ENCODE measurements at regions of chr4 and their contacts with region 1.

Region 1: DNA sequence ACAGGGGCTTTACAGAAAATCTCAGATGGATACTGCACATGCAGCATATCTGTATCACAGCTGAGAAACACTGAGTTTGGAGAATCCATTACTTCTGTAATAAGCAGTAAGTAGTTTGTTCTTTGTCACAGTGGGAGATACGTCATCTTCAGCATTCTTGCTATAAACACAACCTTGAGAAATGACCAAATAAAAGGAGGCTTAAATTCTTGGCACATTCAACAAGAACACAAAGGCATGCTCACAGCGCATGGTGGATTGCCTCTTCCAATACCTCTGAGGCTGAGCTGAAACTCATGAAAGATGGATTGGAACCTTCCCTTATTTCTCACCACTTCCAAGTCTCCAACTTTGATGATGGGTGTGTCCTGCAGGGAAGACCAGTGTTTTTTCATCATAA is 54.5 kb downstream of the ANXA5 start:
- DNase-seq: no peak
- H3K4me3 ChIP-seq: no peak overlapping the region
- H3K4me3 Mint-ChIP-seq: peak overlapping the region; percentile 62
- H3K27ac Mint-ChIP-seq: peak overlapping the region; percentile 93
- H3K4me1 ChIP-seq: peaks cover 30% of the 10 kb centered on the region
- H3K4me1 Mint-ChIP-seq: peaks cover 23% of the 10 kb centered on the region
- H3K27me3 ChIP-seq: no peaks in the 10 kb centered on the region
- H3K27me3 Mint-ChIP-seq: no peaks in the 10 kb centered on the region
- CTCF ChIP-seq: no peak

Region 2: DNA sequence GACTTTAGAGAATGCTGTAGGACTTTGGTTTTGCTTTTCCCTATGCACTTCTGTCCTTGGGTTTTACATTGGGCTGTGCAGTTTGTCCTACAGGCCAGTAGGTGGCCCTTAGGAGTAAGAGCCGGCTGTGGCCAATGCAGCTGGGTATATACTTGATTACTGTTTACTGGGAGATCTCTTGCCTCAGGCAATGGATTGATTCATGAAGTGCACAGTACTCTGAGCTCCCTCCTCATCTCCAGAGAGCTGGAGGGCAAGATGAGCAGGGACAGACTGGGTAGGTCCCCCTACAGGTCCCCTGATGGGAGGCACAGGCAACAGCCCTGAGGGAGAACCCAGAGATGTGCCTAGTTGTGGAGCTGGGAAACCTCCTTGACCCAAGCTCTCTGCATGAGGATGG is 157.7 kb before region 1 on chr4:
- CTCF ChIA-PET with region 1: no interaction called
- POLR2A ChIA-PET with region 1: no interaction called
- intact Hi-C with region 1: loop called (anchors 5 kb)
- DNase-seq: peak in 1 of 2 experiments; percentile 40
- H3K4me3 ChIP-seq: no peak overlapping the region
- H3K4me3 Mint-ChIP-seq: no peak overlapping the region
- H3K27ac Mint-ChIP-seq: no peak overlapping the region
- H3K4me1 ChIP-seq: no peaks in the 10 kb centered on the region
- H3K4me1 Mint-ChIP-seq: no peaks in the 10 kb centered on the region
- H3K27me3 ChIP-seq: no peaks in the 10 kb centered on the region
- H3K27me3 Mint-ChIP-seq: no peaks in the 10 kb centered on the region
- CTCF ChIP-seq: peak; percentile 43 to 60

Region 3: DNA sequence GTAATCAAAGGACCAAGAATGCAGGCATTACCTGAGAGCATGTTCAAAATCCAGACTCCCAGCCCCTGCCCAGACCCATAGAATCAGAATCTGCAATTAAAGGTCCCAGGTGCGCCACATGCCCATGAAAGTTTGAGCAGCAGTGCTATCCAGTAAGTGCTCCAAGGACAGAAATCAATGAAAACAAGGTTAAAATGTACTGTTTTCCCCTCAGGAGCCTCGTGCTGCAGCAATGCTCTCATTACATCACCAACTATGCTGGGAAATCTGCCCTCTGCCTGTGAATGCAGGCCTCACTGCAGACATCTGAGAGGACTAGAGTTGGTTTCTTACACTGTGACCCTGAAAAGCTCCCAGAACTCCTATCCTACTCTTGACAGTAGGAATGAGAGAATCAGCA is 33.4 kb after region 1 on chr4:
- CTCF ChIA-PET with region 1: no interaction called
- POLR2A ChIA-PET with region 1: no interaction called
- intact Hi-C with region 1: loop called (anchors 1 kb)
- DNase-seq: peak in 1 of 2 experiments; percentile 26
- H3K4me3 ChIP-seq: no peak overlapping the region
- H3K4me3 Mint-ChIP-seq: no peak overlapping the region
- H3K27ac Mint-ChIP-seq: no peak overlapping the region
- H3K4me1 ChIP-seq: peaks cover 48% of the 10 kb centered on the region
- H3K4me1 Mint-ChIP-seq: peaks cover 31% of the 10 kb centered on the region
- H3K27me3 ChIP-seq: no peaks in the 10 kb centered on the region
- H3K27me3 Mint-ChIP-seq: no peaks in the 10 kb centered on the region
- CTCF ChIP-seq: peak in 1 of 2 experiments; percentile 21

Measured in Caco-2 (cell line).